Right lobe of liver (tissue), 6 donors: ENCODE measurements at regions of chr15 and their contacts with region 1.

Region 1: GRCh38 chr15:85831415-85832113 is 36.8 kb upstream of the KLHL25 start:
- DNase-seq: peak; percentile 60 to 73 (median 71)
- ATAC-seq: peak; percentile 93 to 97 (median 94)
- H3K4me3 ChIP-seq: no peak overlapping the region
- H3K27ac ChIP-seq: no peak overlapping the region
- H3K4me1 ChIP-seq: no peaks in the 10 kb centered on the region
- H3K27me3 ChIP-seq: no peaks in the 10 kb centered on the region
- CTCF ChIP-seq: peak; percentile 58 to 73 (median 68)
- POLR2A ChIP-seq: no peak

Region 2: DNA sequence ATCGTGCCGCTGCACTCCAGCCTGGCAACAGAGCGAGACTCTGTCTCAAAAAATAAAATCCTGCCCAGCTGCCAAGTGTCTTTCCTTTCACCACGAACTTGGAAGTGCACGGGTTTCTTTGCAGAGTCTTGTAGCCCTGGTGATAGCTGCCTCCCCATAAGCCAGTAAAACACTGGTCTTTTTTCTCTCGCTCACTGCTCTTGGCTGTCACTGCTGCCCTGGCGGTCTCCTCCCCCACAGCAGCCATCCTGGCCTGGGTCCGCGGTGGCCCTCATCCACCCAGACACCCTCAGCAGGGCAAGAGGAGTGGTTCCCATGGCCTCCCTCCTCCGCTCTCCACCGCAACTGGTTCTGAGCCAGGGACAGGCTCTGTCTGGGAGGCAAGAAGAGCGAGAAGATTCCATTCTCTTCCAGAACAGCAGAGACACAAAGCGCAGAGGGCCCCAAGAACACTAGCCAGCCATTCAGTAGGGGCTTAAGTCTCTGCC is 81.2 kb before region 1 on chr15:
- intact Hi-C with region 1: loop called in 1 of 2 experiments (anchors 10 kb)
- DNase-seq: peak in 1 of 3 donors; percentile 45
- ATAC-seq: peak in 1 of 4 donors; percentile 8
- H3K4me3 ChIP-seq: no peak overlapping the region
- H3K27ac ChIP-seq: peak overlapping the region in 1 of 3 donors; percentile 24
- H3K4me1 ChIP-seq: peaks cover 0 to 21% (median 4%) of the 10 kb centered on the region in 4 donors
- H3K27me3 ChIP-seq: no peaks in the 10 kb centered on the region
- CTCF ChIP-seq: no peak
- POLR2A ChIP-seq: no peak

Region 3: GRCh38 chr15:86089422-86089821 is 257.9 kb after region 1 on chr15:
- intact Hi-C with region 1: no loop called
- DNase-seq: no peak
- ATAC-seq: no peak
- H3K4me3 ChIP-seq: no peak overlapping the region
- H3K27ac ChIP-seq: no peak overlapping the region
- H3K4me1 ChIP-seq: no peaks in the 10 kb centered on the region
- H3K27me3 ChIP-seq: no peaks in the 10 kb centered on the region
- CTCF ChIP-seq: no peak
- POLR2A ChIP-seq: no peak